AG04449 (cell line): ENCODE measurements at regions of chr11 and their contacts with region 1.

Region 1: GRCh38 chr11:95089620-95090542 is at the start of gene ENDOD1:
- DNase-seq: no peak
- H3K4me3 ChIP-seq: peak within 1 kb of the TSS; percentile 71
- CTCF ChIP-seq: no peak

Region 2: GRCh38 chr11:94525546-94526324 is 564.1 kb before region 1 on chr11:
- CTCF ChIA-PET with region 1: no interaction called
- POLR2A ChIA-PET with region 1: no interaction called
- DNase-seq: no peak
- H3K4me3 ChIP-seq: no peak overlapping the region
- CTCF ChIP-seq: no peak

Region 3: DNA sequence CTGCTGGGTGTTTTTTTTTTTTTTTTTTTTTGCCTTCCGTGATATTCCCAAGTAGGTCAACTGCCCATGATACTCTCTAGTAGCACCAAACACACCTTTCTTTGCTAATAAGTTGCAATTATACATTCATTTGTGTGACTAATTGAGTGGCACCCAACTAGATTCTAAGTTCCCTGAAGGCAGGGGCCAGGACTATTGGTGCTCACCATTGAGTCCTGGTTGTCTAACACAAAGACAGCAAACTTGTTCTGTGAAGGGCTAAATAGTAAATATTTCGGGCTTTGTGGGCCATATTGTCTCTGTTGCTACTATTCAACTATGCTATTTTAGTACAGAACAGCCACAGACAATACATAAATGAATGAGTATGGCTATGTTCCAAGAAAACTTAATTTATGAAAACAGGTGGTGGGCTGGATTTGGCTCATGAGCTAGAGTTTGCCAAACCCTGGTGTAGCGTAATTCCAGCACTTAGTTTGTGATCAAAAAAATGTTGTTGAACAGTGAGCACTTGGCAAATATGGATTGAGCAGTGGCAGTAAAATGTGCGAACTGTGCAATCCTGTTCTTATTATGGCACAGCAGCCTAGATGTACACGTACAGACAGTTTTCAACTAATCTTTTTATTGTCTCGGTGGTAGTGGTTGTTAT is 11.1 kb after region 1 on chr11:
- CTCF ChIA-PET with region 1: interaction called, 11 read pairs
- POLR2A ChIA-PET with region 1: no interaction called
- DNase-seq: no peak
- H3K4me3 ChIP-seq: no peak overlapping the region
- CTCF ChIP-seq: no peak